Transverse colon (tissue), 4 donors: ENCODE measurements at regions of chr2 and their contacts with region 1.

Region 1: GRCh38 chr2:61006486-61007105 is 10.9 kb upstream of the PEX13 start:
- DNase-seq: no peak
- H3K4me3 ChIP-seq: no peak overlapping the region
- H3K27ac ChIP-seq: no peak overlapping the region
- H3K4me1 ChIP-seq: no peaks in the 10 kb centered on the region
- H3K27me3 ChIP-seq: no peaks in the 10 kb centered on the region
- CTCF ChIP-seq: no peak
- EP300 ChIP-seq: no peak
- POLR2A ChIP-seq: no peak

Region 2: GRCh38 chr2:60707750-60708371 is 298.7 kb before region 1 on chr2:
- in situ Hi-C with region 1: loop called in 1 of 4 experiments (anchors 10 kb)
- intact Hi-C with region 1: no loop called
- DNase-seq: no peak
- H3K4me3 ChIP-seq: no peak overlapping the region
- H3K27ac ChIP-seq: no peak overlapping the region
- H3K4me1 ChIP-seq: no peaks in the 10 kb centered on the region
- H3K27me3 ChIP-seq: no peaks in the 10 kb centered on the region
- CTCF ChIP-seq: peak; percentile 61 to 76 (median 74)
- EP300 ChIP-seq: no peak
- POLR2A ChIP-seq: no peak

Region 3: DNA sequence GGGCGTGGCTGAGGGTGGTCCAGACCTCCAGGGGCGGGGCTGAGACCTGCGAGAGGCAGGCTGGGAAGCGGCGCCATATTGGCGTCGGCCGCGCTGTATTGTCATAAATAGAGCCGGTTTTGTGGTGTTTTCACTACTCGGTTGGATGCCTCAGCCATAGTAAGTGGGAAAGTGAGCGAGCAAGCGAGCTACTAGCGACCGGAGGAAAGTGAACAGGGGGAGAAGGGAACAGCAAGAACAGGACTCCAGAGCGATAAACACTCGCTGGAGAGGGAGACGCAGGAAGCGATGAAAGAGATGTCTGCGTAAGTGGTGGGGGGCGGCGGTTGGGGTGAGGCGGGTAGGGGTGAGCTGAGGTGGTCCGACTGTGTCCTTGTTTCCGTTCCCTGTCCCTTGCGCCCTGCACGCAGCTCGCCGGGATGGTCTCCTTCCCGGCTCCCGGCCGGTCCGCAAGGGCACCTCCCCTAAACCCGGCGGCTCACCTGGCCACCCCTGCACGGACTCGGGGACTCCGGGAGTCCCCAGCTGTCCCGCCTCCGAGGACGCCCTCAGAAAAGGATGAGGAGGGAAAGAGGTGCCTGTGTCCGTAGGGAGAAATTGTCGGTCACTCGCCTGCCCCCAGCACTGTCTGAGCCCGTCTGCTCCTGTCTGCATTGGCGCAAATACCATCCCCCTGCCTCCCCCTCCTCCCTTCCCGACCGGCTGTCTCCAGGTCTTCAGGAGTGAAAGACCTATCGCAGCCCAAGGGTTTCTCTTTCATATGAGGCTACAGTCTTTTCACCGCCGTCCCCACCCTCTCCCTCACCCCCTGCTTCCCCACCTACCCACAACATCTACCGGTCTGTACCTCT is 250.2 kb before region 1 on chr2 and contains the start of gene PAPOLG:
- in situ Hi-C with region 1: no loop called
- intact Hi-C with region 1: no loop called
- DNase-seq: peak; percentile 98
- H3K4me3 ChIP-seq: peak within 1 kb of the TSS; percentile 69 to 96 (median 82)
- H3K27ac ChIP-seq: peak within 1 kb of the TSS; percentile 86 to 92 (median 89)
- H3K4me1 ChIP-seq: peaks cover 0 to 18% (median 13%) of the 10 kb centered on the region in 4 donors
- H3K27me3 ChIP-seq: no peaks in the 10 kb centered on the region
- CTCF ChIP-seq: no peak
- EP300 ChIP-seq: no peak
- POLR2A ChIP-seq: peak; percentile 75
- total RNA-seq, gene PAPOLG: 6.0 to 16.5 (median 12.2) TPM

Region 4: DNA sequence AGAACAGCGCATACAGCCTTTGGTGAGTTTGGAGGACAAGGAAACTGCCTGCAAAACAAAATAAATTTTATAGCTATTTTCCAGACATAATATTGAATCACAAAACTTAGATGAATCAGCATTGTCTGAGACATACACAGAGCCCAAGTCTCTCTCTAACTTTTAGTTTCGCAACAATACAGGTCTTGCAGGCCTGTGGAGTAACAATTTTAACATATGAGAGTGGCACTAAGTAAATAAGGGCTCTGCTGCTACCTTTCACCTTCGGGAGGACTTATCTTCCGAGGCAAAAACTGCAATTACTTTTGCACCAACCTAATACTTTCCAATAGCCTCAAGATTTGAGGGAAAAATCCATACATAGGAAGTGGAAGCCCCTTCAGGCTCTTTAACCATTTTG is 45.1 kb before region 1 on chr2:
- in situ Hi-C with region 1: no loop called
- intact Hi-C with region 1: no loop called
- DNase-seq: no peak
- H3K4me3 ChIP-seq: no peak overlapping the region
- H3K27ac ChIP-seq: no peak overlapping the region
- H3K4me1 ChIP-seq: peaks cover 0 to 7% (median 2%) of the 10 kb centered on the region in 4 donors
- H3K27me3 ChIP-seq: no peaks in the 10 kb centered on the region
- CTCF ChIP-seq: no peak
- EP300 ChIP-seq: no peak
- POLR2A ChIP-seq: no peak